Posterior vena cava (tissue), 2 donors: ENCODE measurements at regions of chr2 and their contacts with region 1.

Region 1: GRCh38 chr2:42743413-42743972 is 20.4 kb downstream of the OXER1 start:
- DNase-seq: no peak

Region 2: DNA sequence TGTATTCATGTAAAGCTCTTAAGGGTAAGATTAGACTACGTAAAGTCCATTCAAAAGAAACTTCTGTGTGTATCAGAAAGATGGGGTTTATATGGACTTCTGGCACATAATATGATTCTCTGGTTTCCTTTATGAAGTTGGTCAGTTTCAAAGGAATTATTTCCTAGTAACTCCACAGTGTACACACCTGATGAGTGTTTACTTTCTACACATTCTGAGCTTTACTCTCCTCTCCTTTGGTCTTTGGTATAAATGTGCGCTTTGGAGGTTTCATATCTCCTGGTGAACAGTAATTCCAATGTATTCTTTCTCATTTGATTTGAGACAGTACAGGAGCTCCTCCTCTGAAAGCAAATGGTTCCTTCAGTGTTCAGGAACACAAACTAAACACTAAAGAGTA is 67.7 kb before region 1 on chr2:
- intact Hi-C with region 1: loop called in 1 of 2 experiments (anchors 2 kb)
- DNase-seq: no peak